ENCODE measurements at regions of chr5 and their contacts with region 1.

Region 1: DNA sequence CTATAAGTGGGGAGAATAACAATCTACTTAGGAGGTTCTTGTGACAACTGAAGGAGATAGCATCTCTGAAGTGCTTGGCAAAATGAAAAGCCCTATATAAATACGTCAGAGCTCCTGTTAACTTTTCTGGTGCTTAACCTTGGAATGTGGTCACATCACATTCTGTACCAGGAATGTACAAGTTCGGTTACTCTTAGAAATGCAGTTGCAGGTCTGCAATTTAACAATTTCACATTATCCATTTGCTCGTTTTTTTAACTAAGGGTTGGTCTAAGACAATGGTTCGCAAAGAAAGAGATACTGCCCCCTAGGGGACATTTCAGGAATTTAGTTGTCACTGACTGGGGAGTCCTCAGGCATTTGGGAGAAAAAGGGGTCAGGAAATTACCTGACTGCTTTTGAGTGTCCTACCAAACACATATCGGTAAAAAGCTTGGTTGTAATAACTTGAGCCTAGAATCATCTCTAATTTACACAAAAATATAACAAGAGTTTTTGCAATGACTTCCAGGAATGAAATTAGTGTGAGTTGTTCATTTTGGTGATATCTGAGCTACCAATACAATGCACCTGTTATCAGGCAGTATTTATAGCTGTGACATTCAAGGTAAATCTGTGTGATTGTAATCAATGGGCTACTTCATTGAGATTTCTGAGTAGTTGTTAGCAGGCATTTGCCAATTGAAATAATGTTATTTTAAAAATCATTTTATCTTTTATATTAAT is 5.4 kb upstream of the HBEGF start:
- DNase-seq: peak; percentile 69 to 76
- ATAC-seq: peak; percentile 63 to 87; a peak in 4 of 6 replicates
- H3K4me3 ChIP-seq: no peak overlapping the region
- H3K27ac ChIP-seq: no peak overlapping the region
- H3K4me1 ChIP-seq: peaks cover 5% of the 10 kb centered on the region
- CTCF ChIP-seq: peak; percentile 93
- EP300 ChIP-seq: no peak
- POLR2A ChIP-seq: no peak
- RAD21 ChIP-seq: peak; percentile 70 to 74

Region 2: GRCh38 chr5:140267559-140268018 is 84.2 kb before region 1 on chr5:
- CTCF ChIA-PET with region 1: interaction called, 1,613 read pairs
- POLR2A ChIA-PET with region 1: interaction called, 21 read pairs
- DNase-seq: no peak
- ATAC-seq: no peak
- H3K4me3 ChIP-seq: no peak overlapping the region
- H3K27ac ChIP-seq: no peak overlapping the region
- H3K4me1 ChIP-seq: no peaks in the 10 kb centered on the region
- CTCF ChIP-seq: no peak
- EP300 ChIP-seq: no peak
- POLR2A ChIP-seq: no peak
- RAD21 ChIP-seq: no peak

Region 3: GRCh38 chr5:140273401-140273877 is 78.3 kb before region 1 on chr5:
- CTCF ChIA-PET with region 1: interaction called, 26 read pairs
- POLR2A ChIA-PET with region 1: no interaction called
- DNase-seq: no peak
- ATAC-seq: no peak
- H3K4me3 ChIP-seq: no peak overlapping the region
- H3K27ac ChIP-seq: no peak overlapping the region
- H3K4me1 ChIP-seq: no peaks in the 10 kb centered on the region
- CTCF ChIP-seq: no peak
- EP300 ChIP-seq: no peak
- POLR2A ChIP-seq: no peak
- RAD21 ChIP-seq: no peak

Region 4: DNA sequence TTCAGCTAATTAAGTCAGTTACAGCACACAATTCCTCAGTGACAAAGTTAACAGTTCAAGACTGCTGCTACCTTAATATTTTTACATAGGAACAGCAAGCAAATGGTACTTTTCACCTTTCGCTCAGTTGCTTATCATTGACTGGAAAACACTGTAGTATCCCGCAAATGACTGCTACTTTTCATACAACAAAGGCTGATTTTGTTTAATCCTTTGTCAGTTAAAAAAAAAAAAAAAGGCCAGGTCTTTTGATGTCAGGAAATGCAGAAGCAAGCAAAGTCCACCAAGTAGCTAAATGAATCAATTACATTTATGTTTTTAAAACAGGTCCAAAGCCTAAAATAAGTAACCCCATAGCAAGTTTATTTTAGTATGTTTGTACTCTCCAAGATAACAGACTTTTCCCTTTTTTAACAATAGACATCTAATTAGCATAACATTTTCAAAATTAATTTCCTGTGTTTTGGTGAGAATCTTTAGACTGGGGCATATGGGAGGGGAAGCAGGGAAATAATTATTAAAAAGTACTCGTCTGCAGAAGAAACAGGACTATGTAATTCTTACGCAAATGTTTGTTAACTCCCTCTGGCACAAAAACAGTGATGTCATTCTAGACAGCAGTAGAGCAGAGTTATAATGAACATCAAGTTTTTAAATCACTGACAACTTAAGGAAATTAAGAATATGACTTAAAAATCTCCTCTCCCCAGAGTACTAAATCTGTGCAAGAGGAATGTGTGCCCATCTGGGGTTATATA is 58.5 kb before region 1 on chr5:
- CTCF ChIA-PET with region 1: interaction called, 11 read pairs
- POLR2A ChIA-PET with region 1: interaction called, 9 read pairs
- DNase-seq: no peak
- ATAC-seq: no peak
- H3K4me3 ChIP-seq: no peak overlapping the region
- H3K27ac ChIP-seq: peak overlapping the region; percentile 39; a peak in 3 of 6 replicates
- H3K4me1 ChIP-seq: peaks cover 68% of the 10 kb centered on the region
- CTCF ChIP-seq: no peak
- EP300 ChIP-seq: no peak
- POLR2A ChIP-seq: no peak
- RAD21 ChIP-seq: no peak

Region 5: DNA sequence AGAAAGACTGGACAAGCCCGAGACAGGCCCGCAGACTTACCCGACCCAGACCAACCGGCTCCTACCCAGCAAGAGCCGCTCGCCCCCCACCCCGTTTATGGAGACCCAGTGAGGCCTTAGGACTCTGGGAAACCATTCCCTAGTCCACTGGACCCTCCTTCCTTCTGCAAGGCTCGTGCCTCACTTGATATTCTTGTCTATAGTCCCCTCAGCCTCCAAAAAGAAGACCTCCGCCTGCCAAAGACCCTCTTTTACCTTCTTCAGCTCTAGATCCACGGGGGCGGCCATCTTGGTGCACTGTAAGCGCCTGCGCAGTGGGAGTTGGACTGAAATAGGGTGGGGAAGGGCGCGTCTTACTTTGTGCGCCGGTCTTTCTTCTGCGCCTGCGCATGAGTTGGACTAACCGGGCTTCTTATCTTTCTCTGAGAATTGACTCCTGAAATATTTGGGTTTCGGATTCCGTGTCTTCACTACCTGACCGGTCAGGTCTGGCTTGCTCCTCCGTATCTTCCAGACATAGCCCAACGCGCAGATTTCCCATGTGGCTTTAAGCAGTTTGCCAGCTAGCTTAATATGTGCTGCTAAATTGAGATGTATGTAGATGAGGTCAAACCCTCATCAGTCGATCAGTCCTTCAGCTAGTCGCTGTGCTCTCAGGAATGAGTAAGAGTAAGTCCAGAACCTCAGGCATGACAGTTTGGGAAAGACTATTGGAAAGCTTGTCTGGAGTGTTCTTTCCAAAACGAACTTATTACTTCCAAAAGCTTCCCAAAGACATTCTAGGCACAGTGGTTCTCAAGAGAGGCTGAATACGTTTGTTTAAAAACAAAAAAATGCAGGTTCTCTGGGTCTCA is 48.8 kb before region 1 on chr5 and contains the start of gene PFDN1:
- CTCF ChIA-PET with region 1: interaction called, 21 read pairs
- POLR2A ChIA-PET with region 1: interaction called, 16 read pairs
- DNase-seq: peak; percentile 95
- ATAC-seq: peak; percentile 95 to 97
- H3K4me3 ChIP-seq: peak within 1 kb of the TSS; percentile 97
- H3K27ac ChIP-seq: peak within 1 kb of the TSS; percentile 90 to 93
- H3K4me1 ChIP-seq: peaks cover 35% of the 10 kb centered on the region
- CTCF ChIP-seq: no peak
- EP300 ChIP-seq: no peak
- POLR2A ChIP-seq: peak; percentile 44
- RAD21 ChIP-seq: no peak
- polyA plus RNA-seq, gene PFDN1: 90.4 and 97.0 TPM in 2 replicates

Region 6: GRCh38 chr5:140322751-140323731 is 28.7 kb before region 1 on chr5:
- CTCF ChIA-PET with region 1: interaction called, 38 read pairs
- POLR2A ChIA-PET with region 1: interaction called, 13 read pairs
- DNase-seq: peak in 1 of 2 experiments; percentile 47
- ATAC-seq: peak; percentile 67 to 76
- H3K4me3 ChIP-seq: no peak overlapping the region
- H3K27ac ChIP-seq: peak overlapping the region; percentile 66 to 89
- H3K4me1 ChIP-seq: peaks cover 51% of the 10 kb centered on the region
- CTCF ChIP-seq: no peak
- EP300 ChIP-seq: 0 out of 5 replicates have a peak, but pooled peaks of 1 of the 2 experiments have one; percentile 10
- POLR2A ChIP-seq: no peak
- RAD21 ChIP-seq: no peak

Region 7: GRCh38 chr5:140336388-140336787 is 15.4 kb before region 1 on chr5:
- CTCF ChIA-PET with region 1: interaction called, 61 read pairs
- POLR2A ChIA-PET with region 1: interaction called, 15 read pairs
- DNase-seq: no peak
- ATAC-seq: no peak
- H3K4me3 ChIP-seq: no peak overlapping the region
- H3K27ac ChIP-seq: no peak overlapping the region
- H3K4me1 ChIP-seq: peaks cover 6% of the 10 kb centered on the region; the same call in 2 of the 3 replicates
- CTCF ChIP-seq: no peak
- EP300 ChIP-seq: no peak
- POLR2A ChIP-seq: no peak
- RAD21 ChIP-seq: no peak

Measured in A549 (cell line).